HCT116 (cell line): ENCODE measurements at regions of chr3 and their contacts with region 1.

Region 1: DNA sequence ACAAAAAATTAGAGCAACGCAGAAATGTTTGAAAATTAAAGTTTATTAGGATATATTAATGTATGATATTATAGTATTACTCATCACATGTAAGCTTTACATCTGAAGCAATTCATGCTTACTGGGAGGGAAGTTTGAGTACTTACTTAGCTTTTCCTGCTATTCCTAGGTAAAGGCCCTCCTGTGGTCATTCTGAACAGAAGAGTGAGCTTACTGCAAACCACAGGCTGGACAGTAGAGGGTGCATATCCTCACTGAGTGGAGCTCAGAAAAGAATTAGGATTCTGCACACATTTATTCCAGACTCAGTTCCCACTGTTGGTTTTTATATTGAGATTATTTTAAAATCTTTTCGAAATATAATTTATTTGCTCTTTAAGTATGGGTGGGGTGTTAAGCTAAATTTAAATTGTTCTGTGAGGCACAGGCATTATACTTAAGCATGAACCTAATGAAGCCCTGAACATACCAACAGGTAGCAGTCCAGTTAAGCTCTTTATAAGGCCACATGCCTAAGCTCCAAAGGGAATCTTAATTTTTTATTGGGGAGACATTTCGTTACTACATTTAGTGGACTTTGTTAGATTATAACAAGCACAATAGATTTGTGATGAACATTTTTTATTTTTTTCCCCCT is 10.2 kb downstream of the MRPS22 start:
- DNase-seq: peak; percentile 60
- ATAC-seq: peak; percentile 95
- H3K4me3 ChIP-seq: no peak overlapping the region
- H3K27ac ChIP-seq: no peak overlapping the region
- H3K4me1 ChIP-seq: no peaks in the 10 kb centered on the region
- H3K27me3 ChIP-seq: no peaks in the 10 kb centered on the region
- CTCF ChIP-seq: peak; percentile 85 to 98 (median 96)
- POLR2A ChIP-seq: no peak
- RAD21 ChIP-seq: peak; percentile 65

Region 2: GRCh38 chr3:139389458-139390209 is 35.6 kb after region 1 on chr3 and contains the start of gene COPB2:
- CTCF ChIA-PET with region 1: interaction called, 12 read pairs
- POLR2A ChIA-PET with region 1: no interaction called
- RAD21 ChIA-PET with region 1: no interaction called
- intact Hi-C with region 1: no loop called
- DNase-seq: peak; percentile 98
- ATAC-seq: peak; percentile 95
- H3K4me3 ChIP-seq: peak within 1 kb of the TSS; percentile 89 to 94
- H3K27ac ChIP-seq: peak within 1 kb of the TSS; percentile 88
- H3K4me1 ChIP-seq: peaks cover 10 to 18% of the 10 kb centered on the region in 2 experiments
- H3K27me3 ChIP-seq: no peaks in the 10 kb centered on the region
- CTCF ChIP-seq: no peak
- POLR2A ChIP-seq: peak; percentile 64
- RAD21 ChIP-seq: no peak
- total RNA-seq, gene COPB2: 119 TPM

Region 3: GRCh38 chr3:139561959-139562676 is 208.1 kb after region 1 on chr3:
- CTCF ChIA-PET with region 1: interaction called, 17 read pairs
- POLR2A ChIA-PET with region 1: no interaction called
- RAD21 ChIA-PET with region 1: no interaction called
- intact Hi-C with region 1: loop called (anchors 1 kb)
- DNase-seq: peak; percentile 56
- ATAC-seq: peak; percentile 95
- H3K4me3 ChIP-seq: no peak overlapping the region
- H3K27ac ChIP-seq: no peak overlapping the region
- H3K4me1 ChIP-seq: no peaks in the 10 kb centered on the region
- H3K27me3 ChIP-seq: no peaks in the 10 kb centered on the region
- CTCF ChIP-seq: peak; percentile 73 to 90 (median 86)
- POLR2A ChIP-seq: no peak
- RAD21 ChIP-seq: peak; percentile 97